Left colon (tissue), 2 donors: ENCODE measurements at regions of chr12 and their contacts with region 1.

Region 1: GRCh38 chr12:49121047-49121696 is 10.0 kb downstream of the TUBA1B start:
- DNase-seq: peak; percentile 42 to 52
- ATAC-seq: peak; percentile 96

Region 2: GRCh38 chr12:49088190-49088931 is 32.8 kb before region 1 on chr12:
- intact Hi-C with region 1: loop called in 1 of 2 experiments (anchors 5 kb)
- DNase-seq: peak; percentile 66 to 73
- ATAC-seq: peak; percentile 93